ENCODE measurements at regions of chr12 and their contacts with region 1.

Region 1: GRCh38 chr12:56571126-56571525 is 49.5 kb downstream of the RBMS2 start:
- DNase-seq: no peak
- H3K4me3 ChIP-seq: no peak overlapping the region
- H3K27ac ChIP-seq: no peak overlapping the region
- H3K4me1 ChIP-seq: no peaks in the 10 kb centered on the region
- H3K27me3 ChIP-seq: no peaks in the 10 kb centered on the region
- CTCF ChIP-seq: no peak

Region 2: GRCh38 chr12:56117778-56118687 is 453.1 kb before region 1 on chr12 and contains the start of gene ZC3H10:
- CTCF ChIA-PET with region 1: no interaction called
- POLR2A ChIA-PET with region 1: no interaction called
- intact Hi-C with region 1: no loop called
- DNase-seq: peak; percentile 99
- H3K4me3 ChIP-seq: peak within 1 kb of the TSS; percentile 71
- H3K27ac ChIP-seq: peak within 1 kb of the TSS; percentile 95
- H3K4me1 ChIP-seq: peaks cover 13% of the 10 kb centered on the region
- H3K27me3 ChIP-seq: no peaks in the 10 kb centered on the region
- CTCF ChIP-seq: peak; percentile 61; the same call in 1 of the 2 replicates
- total RNA-seq, gene ZC3H10: 11.8 and 14.4 TPM in 2 replicates

Region 3: GRCh38 chr12:56413392-56413791 is 157.7 kb before region 1 on chr12:
- CTCF ChIA-PET with region 1: no interaction called
- POLR2A ChIA-PET with region 1: interaction called, 12 read pairs
- intact Hi-C with region 1: no loop called
- DNase-seq: no peak
- H3K4me3 ChIP-seq: no peak overlapping the region
- H3K27ac ChIP-seq: no peak overlapping the region
- H3K4me1 ChIP-seq: no peaks in the 10 kb centered on the region
- H3K27me3 ChIP-seq: no peaks in the 10 kb centered on the region
- CTCF ChIP-seq: no peak

Region 4: DNA sequence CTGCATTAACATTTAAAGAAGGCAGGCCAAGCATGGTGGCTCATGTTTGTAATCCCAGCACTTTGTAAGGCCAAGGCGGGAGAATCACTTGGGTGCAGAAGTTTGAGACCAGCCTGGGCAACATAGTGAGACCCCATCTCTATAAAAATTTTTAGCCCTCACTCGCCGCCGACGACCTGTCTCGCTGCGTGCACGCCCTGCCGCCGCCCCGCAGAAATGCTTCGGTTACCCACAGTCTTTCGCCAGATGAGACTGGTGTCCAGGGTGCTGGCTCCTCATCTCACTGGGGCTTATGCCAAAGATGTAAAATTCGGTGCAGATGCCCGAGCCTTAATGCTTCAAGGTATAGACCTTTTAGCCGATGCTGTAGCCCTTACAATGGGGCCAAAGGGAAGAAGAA is 60.3 kb before region 1 on chr12:
- CTCF ChIA-PET with region 1: interaction called, 26 read pairs
- POLR2A ChIA-PET with region 1: no interaction called
- intact Hi-C with region 1: loop called (anchors 5 kb)
- DNase-seq: no peak
- H3K4me3 ChIP-seq: no peak overlapping the region
- H3K27ac ChIP-seq: no peak overlapping the region
- H3K4me1 ChIP-seq: no peaks in the 10 kb centered on the region
- H3K27me3 ChIP-seq: no peaks in the 10 kb centered on the region
- CTCF ChIP-seq: no peak

Region 5: DNA sequence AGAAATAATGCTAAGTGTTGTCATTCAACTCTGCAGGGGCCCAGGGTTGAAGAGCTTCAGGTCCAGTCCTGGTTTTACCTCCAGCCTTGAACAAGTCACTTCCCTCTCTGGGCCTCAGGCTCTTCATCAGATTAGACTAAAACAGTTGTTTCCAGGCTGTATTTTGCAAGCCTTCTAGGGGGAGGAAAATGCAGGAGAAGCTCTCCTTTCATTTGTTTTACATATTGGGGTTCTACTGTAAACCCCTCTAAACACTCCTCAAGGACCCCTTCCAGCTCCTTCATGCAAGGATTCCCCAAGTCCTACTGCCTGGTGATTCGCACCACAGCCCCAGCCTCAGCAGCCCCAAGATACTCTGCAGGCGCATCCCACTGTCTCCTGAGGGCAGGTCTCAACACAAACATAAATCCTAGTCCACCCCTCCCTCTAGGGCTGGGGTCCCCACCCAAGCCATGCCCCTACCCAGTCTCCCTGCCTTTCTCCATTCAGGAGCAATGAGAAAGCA is 360.4 kb after region 1 on chr12:
- CTCF ChIA-PET with region 1: no interaction called
- POLR2A ChIA-PET with region 1: no interaction called
- intact Hi-C with region 1: no loop called
- DNase-seq: peak; percentile 75
- H3K4me3 ChIP-seq: no peak overlapping the region
- H3K27ac ChIP-seq: peak overlapping the region; percentile 76
- H3K4me1 ChIP-seq: peaks cover 13% of the 10 kb centered on the region
- H3K27me3 ChIP-seq: no peaks in the 10 kb centered on the region
- CTCF ChIP-seq: no peak

Measured in A673 (cell line).